Prostate gland (tissue), 2 donors: ENCODE measurements at regions of chr11 and their contacts with region 1.

Region 1: GRCh38 chr11:63536669-63537292 is at the start of gene PLAAT4:
- DNase-seq: peak; percentile 28
- H3K4me3 ChIP-seq: peak within 1 kb of the TSS; percentile 24
- H3K27ac ChIP-seq: peak within 1 kb of the TSS; percentile 84
- H3K4me1 ChIP-seq: peaks cover 13% of the 10 kb centered on the region
- H3K27me3 ChIP-seq: no peaks in the 10 kb centered on the region
- CTCF ChIP-seq: no peak
- POLR2A ChIP-seq: peak; percentile 37
- total RNA-seq, gene PLAAT4: 47.6 to 50.8 TPM

Region 2: DNA sequence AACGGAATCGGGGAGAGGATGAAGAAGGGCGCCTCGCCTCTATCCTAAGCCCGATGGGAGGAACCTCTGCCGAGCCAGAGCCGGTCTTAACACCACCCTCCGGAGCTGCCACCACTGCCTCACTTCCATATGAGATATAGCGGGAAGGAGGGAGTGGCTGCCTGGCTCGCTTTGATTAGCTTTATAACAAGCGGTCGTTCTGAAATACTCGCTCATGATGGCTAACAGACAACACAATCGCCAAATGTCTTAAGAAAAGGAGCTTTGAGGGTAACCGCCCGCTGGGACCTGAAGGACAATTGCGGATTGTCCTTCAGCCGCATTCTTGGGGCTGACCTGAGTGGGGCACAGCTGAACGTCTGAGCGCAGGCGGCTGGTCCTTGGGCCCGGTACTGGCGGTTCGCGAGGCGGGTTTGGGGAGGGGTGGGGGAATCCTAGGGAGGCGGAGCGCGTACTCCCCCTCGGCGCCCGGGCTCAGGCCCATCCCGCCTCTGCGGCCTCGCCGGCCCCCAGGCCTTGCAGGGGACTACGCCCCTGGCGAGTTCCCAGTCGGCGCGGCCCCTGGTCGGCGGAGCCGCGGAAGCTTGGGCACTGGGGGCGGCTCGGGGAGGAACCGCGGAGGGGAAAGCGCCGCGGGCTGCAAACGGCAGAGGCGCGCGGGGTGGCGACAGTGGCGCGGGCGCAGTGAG is 46.1 kb before region 1 on chr11 and contains the start of gene PLAAT5:
- intact Hi-C with region 1: loop called (anchors 5 kb)
- DNase-seq: no peak
- H3K4me3 ChIP-seq: peak within 1 kb of the TSS; percentile 31 to 35
- H3K27ac ChIP-seq: peak within 1 kb of the TSS; percentile 38 to 62
- H3K4me1 ChIP-seq: no peaks in the 10 kb centered on the region
- H3K27me3 ChIP-seq: no peaks in the 10 kb centered on the region
- CTCF ChIP-seq: no peak
- POLR2A ChIP-seq: no peak
- total RNA-seq, gene PLAAT5: 25.7 TPM in 1 of 2 donors, not detected in the other

Region 3: GRCh38 chr11:63573881-63574855 is 37.4 kb after region 1 on chr11:
- intact Hi-C with region 1: loop called (anchors 2 kb)
- DNase-seq: peak; percentile 67
- H3K4me3 ChIP-seq: peak overlapping the region; percentile 13 to 23
- H3K27ac ChIP-seq: peak overlapping the region; percentile 62 to 71
- H3K4me1 ChIP-seq: peaks cover 2% of the 10 kb centered on the region
- H3K27me3 ChIP-seq: no peaks in the 10 kb centered on the region
- CTCF ChIP-seq: peak in 1 of 4 experiments; percentile 8
- POLR2A ChIP-seq: no peak

Region 4: DNA sequence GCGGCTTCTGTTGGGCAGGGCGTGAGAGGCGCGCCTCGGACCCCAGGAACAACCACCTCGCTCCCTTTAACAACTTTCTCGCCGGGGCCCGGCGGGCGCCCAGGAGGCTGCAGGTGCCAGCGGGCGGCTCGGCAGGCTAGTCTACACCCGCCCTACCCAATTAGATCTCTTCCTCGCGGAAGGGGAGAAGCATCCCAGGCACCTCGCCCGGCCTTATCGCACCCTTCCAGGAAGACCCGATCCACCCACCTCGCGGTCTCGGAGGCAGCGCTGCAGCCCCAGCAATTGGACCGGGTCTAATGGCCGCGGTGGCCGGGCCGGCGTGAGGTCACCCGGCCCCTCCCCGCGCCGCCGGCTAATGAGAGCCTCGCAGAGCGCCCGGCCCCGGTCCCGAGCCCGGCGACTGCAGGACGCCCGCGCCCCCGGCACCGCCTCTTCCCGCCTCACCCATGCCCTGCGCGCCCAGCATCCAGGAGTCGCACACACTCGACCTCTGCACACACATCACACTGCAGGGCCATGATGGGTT is 77.4 kb after region 1 on chr11 and contains the start of gene PLAAT3:
- intact Hi-C with region 1: loop called (anchors 5 kb)
- DNase-seq: no peak
- H3K4me3 ChIP-seq: peak within 1 kb of the TSS; percentile 47 to 52
- H3K27ac ChIP-seq: peak within 1 kb of the TSS; percentile 33 to 66
- H3K4me1 ChIP-seq: no peaks in the 10 kb centered on the region
- H3K27me3 ChIP-seq: peaks cover 2% of the 10 kb centered on the region
- CTCF ChIP-seq: no peak
- POLR2A ChIP-seq: peak; percentile 25
- total RNA-seq, gene PLAAT3: 7.0 to 118 TPM

Region 5: GRCh38 chr11:63635762-63636465 is 99.1 kb after region 1 on chr11:
- intact Hi-C with region 1: loop called (anchors 5 kb)
- DNase-seq: peak; percentile 48
- H3K4me3 ChIP-seq: no peak overlapping the region
- H3K27ac ChIP-seq: no peak overlapping the region
- H3K4me1 ChIP-seq: no peaks in the 10 kb centered on the region
- H3K27me3 ChIP-seq: no peaks in the 10 kb centered on the region
- CTCF ChIP-seq: peak in 3 of 4 experiments; percentile 66 to 84 (median 79)
- POLR2A ChIP-seq: no peak